CD4-positive, alpha-beta memory T cell (primary cell): ENCODE measurements at regions of chr5 and their contacts with region 1.

Region 1: GRCh38 chr5:10627160-10627701 is 63.4 kb downstream of the ANKRD33B start:
- DNase-seq: no peak
- H3K4me3 ChIP-seq: peak overlapping the region; percentile 44 to 46
- H3K4me3 Mint-ChIP-seq: peak overlapping the region; percentile 83 to 95 (median 87)
- H3K27ac ChIP-seq: peak overlapping the region; percentile 40
- H3K27ac Mint-ChIP-seq: peak overlapping the region; percentile 62 to 95 (median 80)
- H3K4me1 ChIP-seq: peaks cover 18% of the 10 kb centered on the region
- H3K4me1 Mint-ChIP-seq: peaks cover 17 to 41% (median 23%) of the 10 kb centered on the region in 4 donors
- H3K27me3 ChIP-seq: no peaks in the 10 kb centered on the region
- H3K27me3 Mint-ChIP-seq: peaks cover 0 to 4% of the 10 kb centered on the region in 2 donors

Region 2: GRCh38 chr5:9387879-9388278 is 1239.4 kb before region 1 on chr5:
- CTCF ChIA-PET with region 1: no interaction called
- POLR2A ChIA-PET with region 1: no interaction called
- intact Hi-C with region 1: no loop called
- DNase-seq: no peak
- H3K4me3 ChIP-seq: no peak overlapping the region
- H3K4me3 Mint-ChIP-seq: no peak overlapping the region
- H3K27ac ChIP-seq: no peak overlapping the region
- H3K27ac Mint-ChIP-seq: no peak overlapping the region
- H3K4me1 ChIP-seq: no peaks in the 10 kb centered on the region
- H3K4me1 Mint-ChIP-seq: peaks cover 0 to 1% (median 0%) of the 10 kb centered on the region in 4 donors
- H3K27me3 ChIP-seq: no peaks in the 10 kb centered on the region
- H3K27me3 Mint-ChIP-seq: no peaks in the 10 kb centered on the region

Region 3: DNA sequence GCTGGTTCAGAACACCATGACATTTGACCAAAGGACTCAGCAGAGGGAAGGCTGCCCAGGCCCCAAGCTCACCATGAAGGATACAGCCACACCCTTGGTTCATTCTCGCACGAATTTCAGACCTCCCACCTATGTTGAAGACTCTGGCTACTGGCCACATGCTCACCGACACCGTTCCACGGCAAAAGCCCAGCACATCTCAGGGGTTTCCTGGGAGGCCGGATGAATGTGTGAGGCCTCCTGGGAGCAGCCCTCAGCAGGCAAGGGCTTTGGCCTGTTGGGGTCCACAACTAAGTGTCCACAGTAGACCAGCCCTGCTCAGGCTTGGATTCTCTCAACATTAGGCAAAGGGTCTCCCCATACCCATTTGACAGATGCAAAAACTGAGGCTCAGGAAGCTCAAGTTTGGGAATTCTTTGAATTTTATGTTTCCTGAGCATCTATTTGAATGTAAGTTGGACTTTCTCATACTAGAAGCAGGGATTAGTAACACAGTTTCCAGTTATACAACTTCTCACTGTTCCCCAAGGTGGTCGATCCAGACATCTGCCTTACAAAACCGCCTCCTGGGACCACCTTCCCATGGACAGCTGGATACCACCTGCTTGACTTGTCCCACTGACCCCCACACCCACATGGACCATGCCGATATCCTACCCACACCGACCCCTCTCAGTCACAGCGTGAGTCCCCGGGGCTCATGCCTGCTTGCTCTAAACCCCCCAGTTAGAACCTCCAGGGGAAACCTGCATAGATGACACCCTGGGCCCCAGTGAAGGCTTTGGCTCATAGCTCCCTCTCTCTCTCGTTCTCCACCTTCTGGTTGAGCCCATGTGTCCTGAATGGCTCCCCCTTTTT is 349.2 kb before region 1 on chr5:
- CTCF ChIA-PET with region 1: interaction called, 144 read pairs
- POLR2A ChIA-PET with region 1: no interaction called
- intact Hi-C with region 1: no loop called
- DNase-seq: no peak
- H3K4me3 ChIP-seq: no peak overlapping the region
- H3K4me3 Mint-ChIP-seq: peak overlapping the region in 1 of 8 donors; percentile 46
- H3K27ac ChIP-seq: no peak overlapping the region
- H3K27ac Mint-ChIP-seq: peak overlapping the region in 1 of 7 donors; percentile 55
- H3K4me1 ChIP-seq: no peaks in the 10 kb centered on the region
- H3K4me1 Mint-ChIP-seq: peaks cover 0 to 24% (median 12%) of the 10 kb centered on the region in 4 donors
- H3K27me3 ChIP-seq: no peaks in the 10 kb centered on the region
- H3K27me3 Mint-ChIP-seq: peaks cover 0 to 2% of the 10 kb centered on the region in 2 donors

Region 4: DNA sequence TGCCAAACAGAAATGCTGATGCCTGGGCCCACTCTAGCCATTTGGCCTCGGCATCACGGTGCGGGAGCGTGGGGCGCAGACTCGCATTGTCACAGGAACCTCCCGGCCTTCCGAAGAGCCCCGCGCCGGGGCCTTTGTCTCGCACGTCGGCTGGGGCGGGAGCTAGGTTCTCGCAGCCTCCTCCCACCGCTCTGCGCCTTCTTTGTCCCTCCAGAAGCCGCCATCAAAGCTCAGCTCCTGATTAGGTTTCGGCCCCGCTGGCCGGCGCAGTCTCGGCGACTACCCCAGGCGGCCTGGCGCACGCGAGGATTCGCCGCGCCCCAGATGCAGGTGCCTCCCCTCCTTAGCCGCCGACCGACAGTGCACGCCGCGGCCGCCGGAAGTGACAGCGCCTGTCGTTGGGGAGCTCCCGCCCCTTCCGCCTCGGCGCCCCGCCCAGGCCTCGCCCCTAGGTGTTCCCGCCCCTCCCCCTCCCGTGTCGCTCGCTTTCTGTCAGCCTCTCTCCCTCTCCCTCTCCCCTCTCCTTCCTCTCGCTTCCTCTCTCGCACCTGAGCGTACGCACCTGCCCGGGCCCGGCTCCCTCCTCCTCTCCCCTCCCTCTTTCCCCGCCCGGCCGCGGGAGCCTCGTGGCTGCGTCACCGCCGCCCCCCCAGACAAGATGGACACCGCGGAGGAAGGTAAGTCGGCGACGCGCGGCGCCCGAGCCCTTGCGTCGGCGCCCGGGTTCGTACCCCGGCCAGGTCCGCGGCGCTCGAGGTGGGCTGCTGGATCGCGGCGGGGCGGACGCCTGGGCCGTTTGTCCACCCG is 273.8 kb before region 1 on chr5 and contains the start of gene MARCHF6:
- CTCF ChIA-PET with region 1: interaction called, 3 read pairs
- POLR2A ChIA-PET with region 1: interaction called, 7 read pairs
- intact Hi-C with region 1: loop called (anchors 5 kb)
- DNase-seq: peak; percentile 94 to 97 (median 94)
- H3K4me3 ChIP-seq: peak within 1 kb of the TSS; percentile 85
- H3K4me3 Mint-ChIP-seq: peak within 1 kb of the TSS; percentile 93 to 100 (median 99)
- H3K27ac ChIP-seq: peak within 1 kb of the TSS; percentile 83
- H3K27ac Mint-ChIP-seq: peak within 1 kb of the TSS; percentile 95 to 100 (median 99)
- H3K4me1 ChIP-seq: peaks cover 49% of the 10 kb centered on the region
- H3K4me1 Mint-ChIP-seq: peaks cover 27 to 54% (median 35%) of the 10 kb centered on the region in 4 donors
- H3K27me3 ChIP-seq: no peaks in the 10 kb centered on the region
- H3K27me3 Mint-ChIP-seq: no peaks in the 10 kb centered on the region
- total RNA-seq, gene MARCHF6: 195 to 203 TPM

Region 5: DNA sequence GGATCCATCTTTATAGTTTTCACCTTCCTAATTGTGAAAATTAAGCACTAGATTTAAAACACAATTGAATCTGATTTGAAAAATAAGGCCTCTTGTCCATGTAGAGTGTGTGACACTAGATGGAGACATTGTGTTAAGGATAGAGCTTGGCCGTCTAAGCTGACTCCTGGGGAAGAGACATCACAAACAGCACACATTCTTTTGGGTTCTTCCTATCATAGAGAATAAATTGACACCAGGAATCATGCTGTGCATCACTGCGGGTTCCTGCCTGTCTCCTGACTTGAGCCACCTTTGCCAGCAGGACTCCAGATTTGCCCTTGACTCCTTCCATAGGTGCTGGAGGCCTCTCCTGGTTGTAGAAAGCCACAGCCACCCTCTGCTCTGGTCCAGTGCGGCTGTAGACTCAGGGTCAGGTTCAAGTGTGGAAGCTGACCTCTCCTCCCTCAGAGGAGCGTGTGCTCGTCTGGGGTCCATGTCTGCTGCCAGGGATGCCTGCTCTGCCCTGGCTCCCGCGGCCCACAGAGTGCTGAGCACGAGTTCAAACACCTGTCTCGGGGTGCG is 174.4 kb before region 1 on chr5:
- CTCF ChIA-PET with region 1: interaction called, 188 read pairs
- POLR2A ChIA-PET with region 1: interaction called, 12 read pairs
- intact Hi-C with region 1: loop called (anchors 1 kb)
- DNase-seq: peak in 4 of 5 donors; percentile 52 to 60 (median 58)
- H3K4me3 ChIP-seq: no peak overlapping the region
- H3K4me3 Mint-ChIP-seq: no peak overlapping the region
- H3K27ac ChIP-seq: no peak overlapping the region
- H3K27ac Mint-ChIP-seq: no peak overlapping the region
- H3K4me1 ChIP-seq: no peaks in the 10 kb centered on the region
- H3K4me1 Mint-ChIP-seq: peaks cover 6 to 23% (median 11%) of the 10 kb centered on the region in 4 donors
- H3K27me3 ChIP-seq: no peaks in the 10 kb centered on the region
- H3K27me3 Mint-ChIP-seq: no peaks in the 10 kb centered on the region

Region 6: GRCh38 chr5:10467240-10468198 is 159.7 kb before region 1 on chr5:
- CTCF ChIA-PET with region 1: no interaction called
- POLR2A ChIA-PET with region 1: no interaction called
- intact Hi-C with region 1: no loop called
- DNase-seq: no peak
- H3K4me3 ChIP-seq: no peak overlapping the region
- H3K4me3 Mint-ChIP-seq: no peak overlapping the region
- H3K27ac ChIP-seq: no peak overlapping the region
- H3K27ac Mint-ChIP-seq: peak overlapping the region in 1 of 7 donors; percentile 54
- H3K4me1 ChIP-seq: no peaks in the 10 kb centered on the region
- H3K4me1 Mint-ChIP-seq: peaks cover 0 to 5% (median 2%) of the 10 kb centered on the region in 4 donors
- H3K27me3 ChIP-seq: no peaks in the 10 kb centered on the region
- H3K27me3 Mint-ChIP-seq: no peaks in the 10 kb centered on the region

Region 7: GRCh38 chr5:10611290-10611689 is 15.9 kb before region 1 on chr5:
- CTCF ChIA-PET with region 1: interaction called, 14 read pairs
- POLR2A ChIA-PET with region 1: no interaction called
- intact Hi-C with region 1: no loop called
- DNase-seq: no peak
- H3K4me3 ChIP-seq: no peak overlapping the region
- H3K4me3 Mint-ChIP-seq: no peak overlapping the region
- H3K27ac ChIP-seq: no peak overlapping the region
- H3K27ac Mint-ChIP-seq: no peak overlapping the region
- H3K4me1 ChIP-seq: no peaks in the 10 kb centered on the region
- H3K4me1 Mint-ChIP-seq: peaks cover 0 to 12% (median 5%) of the 10 kb centered on the region in 4 donors
- H3K27me3 ChIP-seq: no peaks in the 10 kb centered on the region
- H3K27me3 Mint-ChIP-seq: peaks cover 0 to 3% of the 10 kb centered on the region in 2 donors

Region 8: DNA sequence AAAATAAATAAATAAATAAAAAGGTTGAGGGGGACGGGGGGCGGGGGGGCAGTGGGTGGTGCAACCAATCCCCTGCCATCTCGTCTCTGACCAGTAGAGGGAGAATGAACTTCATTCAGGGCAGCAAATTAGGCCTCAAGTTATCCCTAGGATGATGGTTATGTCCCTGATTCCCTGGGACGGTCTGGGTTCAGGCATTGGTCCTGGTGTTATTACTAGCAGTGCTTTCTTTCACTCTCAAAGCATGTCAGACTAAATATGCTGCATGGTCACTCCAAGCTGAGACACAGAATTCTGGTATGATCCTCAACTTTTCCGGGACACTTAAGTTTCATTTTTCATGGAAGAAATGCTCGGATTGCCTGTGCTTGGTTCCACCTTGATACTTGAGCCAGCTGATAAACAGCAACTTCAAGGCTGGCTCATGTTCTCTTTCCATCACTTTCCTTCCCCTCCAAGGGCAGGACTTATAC is 74.4 kb after region 1 on chr5:
- CTCF ChIA-PET with region 1: no interaction called
- POLR2A ChIA-PET with region 1: no interaction called
- intact Hi-C with region 1: no loop called
- DNase-seq: peak in 3 of 5 donors; percentile 11 to 14 (median 14)
- H3K4me3 ChIP-seq: no peak overlapping the region
- H3K4me3 Mint-ChIP-seq: no peak overlapping the region
- H3K27ac ChIP-seq: no peak overlapping the region
- H3K27ac Mint-ChIP-seq: peak overlapping the region in 1 of 7 donors; percentile 56
- H3K4me1 ChIP-seq: peaks cover 26% of the 10 kb centered on the region
- H3K4me1 Mint-ChIP-seq: peaks cover 30 to 43% (median 37%) of the 10 kb centered on the region in 4 donors
- H3K27me3 ChIP-seq: no peaks in the 10 kb centered on the region
- H3K27me3 Mint-ChIP-seq: no peaks in the 10 kb centered on the region